ENCODE measurements at regions of chr2 and their contacts with region 1.

Region 1: DNA sequence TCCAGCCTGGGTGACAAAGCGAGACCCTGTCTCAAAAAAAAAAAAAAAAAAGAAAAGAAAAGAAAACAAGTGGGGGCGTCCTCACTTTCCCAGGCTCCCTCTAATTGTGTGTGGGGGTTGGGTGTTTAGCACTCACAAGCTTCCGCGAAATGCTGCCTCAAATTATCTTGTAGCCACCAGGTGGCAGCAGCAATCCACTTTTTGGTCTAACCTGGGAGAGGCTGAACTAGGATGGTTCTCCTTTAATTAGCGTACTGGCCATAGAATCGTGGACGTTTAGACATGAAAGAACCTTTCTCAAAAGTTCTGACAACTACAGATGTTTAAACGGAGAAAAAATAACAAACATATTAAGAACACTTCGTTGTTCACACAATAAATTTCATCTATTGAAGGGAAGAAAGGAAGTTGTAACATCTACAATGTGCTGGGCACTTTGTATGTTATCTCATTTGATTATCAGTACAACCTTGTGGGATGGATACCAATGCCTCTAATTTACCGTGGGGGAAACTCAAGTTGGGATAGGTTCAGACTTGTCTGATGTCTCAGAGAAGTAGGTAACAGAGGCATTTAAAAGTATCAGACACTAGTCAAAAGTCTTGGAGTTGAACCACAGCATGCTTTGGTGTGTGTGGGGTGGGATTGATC is 122.7 kb upstream of the NABP1 start:
- H3K4me3 ChIP-seq: no peak overlapping the region
- H3K27ac ChIP-seq: no peak overlapping the region
- H3K4me1 ChIP-seq: peaks cover 3% of the 10 kb centered on the region; the same call in 1 of the 2 replicates
- CTCF ChIP-seq: peak; percentile 81

Region 2: DNA sequence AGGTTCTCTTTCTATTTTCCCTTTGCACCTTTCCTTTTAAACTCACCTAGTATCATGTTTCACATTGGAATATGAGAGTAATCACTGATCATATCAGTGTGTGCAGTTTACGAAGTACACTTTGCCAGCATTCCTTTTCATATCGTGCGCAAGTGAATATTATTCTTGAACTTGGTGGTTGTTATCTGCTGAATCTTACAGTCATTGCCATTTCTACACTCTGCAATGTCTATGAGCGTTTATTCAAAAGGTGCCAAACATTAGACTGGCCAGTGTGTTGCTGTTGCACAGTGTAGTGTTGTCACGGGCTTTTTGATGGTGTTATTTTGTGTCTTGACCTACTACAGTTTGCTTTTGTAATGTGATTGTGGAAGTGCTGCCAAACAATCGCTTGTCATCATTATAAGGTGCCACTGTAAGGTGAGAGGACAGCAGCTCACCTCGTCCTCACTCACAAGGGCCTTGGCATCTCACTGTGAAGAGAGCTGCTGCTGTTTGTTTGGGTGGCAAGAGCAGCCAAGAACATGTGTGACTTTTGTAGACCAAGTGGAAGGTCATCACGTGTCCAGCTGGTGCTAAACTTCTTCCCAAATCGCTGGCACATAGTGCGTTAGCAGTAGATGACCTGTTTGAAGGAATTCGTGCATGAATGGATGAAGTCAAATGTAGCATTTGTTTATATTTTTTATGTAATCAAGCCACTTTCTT is 196.7 kb before region 1 on chr2:
- CTCF ChIA-PET with region 1: no interaction called
- POLR2A ChIA-PET with region 1: no interaction called
- H3K4me3 ChIP-seq: no peak overlapping the region
- H3K27ac ChIP-seq: no peak overlapping the region
- H3K4me1 ChIP-seq: peaks cover 13% of the 10 kb centered on the region
- CTCF ChIP-seq: no peak

Region 3: DNA sequence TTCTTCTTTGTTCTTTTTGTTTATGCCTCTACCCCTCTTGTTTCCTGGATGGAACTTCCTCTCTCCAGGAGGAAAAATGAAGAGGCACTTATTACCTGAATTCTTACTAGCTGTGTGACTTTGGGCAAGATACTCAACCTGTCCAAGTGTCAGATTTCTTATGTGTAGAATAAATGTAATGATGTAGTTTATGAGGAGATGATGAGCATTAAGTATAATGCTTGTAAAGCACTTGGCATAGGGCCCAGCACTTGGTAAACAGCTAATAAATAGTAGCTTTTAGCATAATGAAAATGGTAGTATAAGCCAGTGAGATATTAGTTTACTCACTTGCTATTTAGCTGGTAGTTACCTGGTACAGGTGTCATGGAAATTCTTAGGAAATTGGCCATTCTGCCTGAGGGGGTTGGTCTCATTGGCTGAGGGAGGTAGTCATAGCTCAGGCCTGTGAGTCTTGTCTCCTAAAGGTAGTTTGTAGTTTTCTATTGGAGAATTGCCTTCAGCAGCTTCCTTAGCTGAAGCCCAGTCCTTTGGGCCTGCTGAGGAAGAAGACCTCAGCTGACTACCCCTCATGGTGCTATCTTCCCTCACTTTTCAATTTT is 10.7 kb before region 1 on chr2:
- CTCF ChIA-PET with region 1: interaction called, 17 read pairs
- POLR2A ChIA-PET with region 1: no interaction called
- H3K4me3 ChIP-seq: no peak overlapping the region
- H3K27ac ChIP-seq: no peak overlapping the region
- H3K4me1 ChIP-seq: no peaks in the 10 kb centered on the region
- CTCF ChIP-seq: no peak

Region 4: DNA sequence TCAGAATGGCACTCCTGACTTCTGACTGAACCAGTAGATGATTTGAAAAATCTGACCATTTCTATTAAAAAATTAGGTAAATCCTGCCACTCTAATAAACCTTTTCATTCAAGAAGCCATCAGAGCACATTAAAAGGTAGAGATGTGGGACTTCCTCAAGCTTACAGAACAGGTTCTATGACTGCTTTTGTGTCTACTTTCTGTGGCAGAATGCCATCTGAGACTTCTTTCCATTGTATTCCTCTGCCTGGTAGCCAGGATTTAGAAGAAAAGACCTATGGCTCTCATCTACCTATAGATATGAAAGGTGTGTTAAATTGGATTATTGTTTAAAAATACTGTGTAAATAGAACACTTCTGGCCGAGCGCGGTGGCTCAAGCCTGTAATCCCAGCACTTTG is 22.8 kb after region 1 on chr2:
- CTCF ChIA-PET with region 1: no interaction called
- POLR2A ChIA-PET with region 1: no interaction called
- H3K4me3 ChIP-seq: no peak overlapping the region
- H3K27ac ChIP-seq: no peak overlapping the region
- H3K4me1 ChIP-seq: no peaks in the 10 kb centered on the region
- CTCF ChIP-seq: no peak

Region 5: GRCh38 chr2:191869178-191869577 is 314.0 kb after region 1 on chr2:
- CTCF ChIA-PET with region 1: interaction called, 11 read pairs
- POLR2A ChIA-PET with region 1: no interaction called
- H3K4me3 ChIP-seq: no peak overlapping the region
- H3K27ac ChIP-seq: no peak overlapping the region
- H3K4me1 ChIP-seq: no peaks in the 10 kb centered on the region
- CTCF ChIP-seq: no peak; the same call in 1 of the 2 replicates

Measured in HEK293 (cell line).